ENCODE measurements at regions of chr1 and their contacts with region 1.

Region 1: DNA sequence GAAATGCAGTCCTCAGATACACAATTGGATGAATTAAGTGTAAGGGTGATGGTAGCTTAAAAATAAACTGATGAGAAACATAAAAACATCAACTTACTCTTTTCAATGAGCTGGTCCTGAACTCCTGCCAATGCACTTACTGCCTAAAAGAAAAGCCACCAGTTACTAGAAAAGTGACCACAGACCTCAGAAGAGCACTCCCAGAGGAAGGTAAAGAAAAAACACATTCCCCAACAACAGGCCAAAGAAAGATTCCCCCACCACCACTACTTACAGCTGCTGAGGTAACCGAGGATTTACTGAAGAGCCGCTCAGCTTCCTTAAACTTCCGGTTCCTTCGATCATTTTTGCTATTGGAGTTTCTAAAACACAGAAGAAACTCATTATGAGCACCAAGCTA is 5.4 kb downstream of the MEAF6 start:
- DNase-seq: no peak
- ATAC-seq: no peak
- H3K4me3 Mint-ChIP-seq: no peak overlapping the region
- H3K27ac Mint-ChIP-seq: peak overlapping the region; percentile 78
- H3K4me1 Mint-ChIP-seq: peaks cover 42% of the 10 kb centered on the region
- H3K27me3 Mint-ChIP-seq: no peaks in the 10 kb centered on the region

Region 2: GRCh38 chr1:36816348-36816747 is 692.8 kb before region 1 on chr1:
- CTCF ChIA-PET with region 1: no interaction called
- POLR2A ChIA-PET with region 1: no interaction called
- intact Hi-C with region 1: no loop called
- DNase-seq: no peak
- ATAC-seq: no peak
- H3K4me3 Mint-ChIP-seq: no peak overlapping the region
- H3K27ac Mint-ChIP-seq: no peak overlapping the region
- H3K4me1 Mint-ChIP-seq: no peaks in the 10 kb centered on the region
- H3K27me3 Mint-ChIP-seq: no peaks in the 10 kb centered on the region

Region 3: DNA sequence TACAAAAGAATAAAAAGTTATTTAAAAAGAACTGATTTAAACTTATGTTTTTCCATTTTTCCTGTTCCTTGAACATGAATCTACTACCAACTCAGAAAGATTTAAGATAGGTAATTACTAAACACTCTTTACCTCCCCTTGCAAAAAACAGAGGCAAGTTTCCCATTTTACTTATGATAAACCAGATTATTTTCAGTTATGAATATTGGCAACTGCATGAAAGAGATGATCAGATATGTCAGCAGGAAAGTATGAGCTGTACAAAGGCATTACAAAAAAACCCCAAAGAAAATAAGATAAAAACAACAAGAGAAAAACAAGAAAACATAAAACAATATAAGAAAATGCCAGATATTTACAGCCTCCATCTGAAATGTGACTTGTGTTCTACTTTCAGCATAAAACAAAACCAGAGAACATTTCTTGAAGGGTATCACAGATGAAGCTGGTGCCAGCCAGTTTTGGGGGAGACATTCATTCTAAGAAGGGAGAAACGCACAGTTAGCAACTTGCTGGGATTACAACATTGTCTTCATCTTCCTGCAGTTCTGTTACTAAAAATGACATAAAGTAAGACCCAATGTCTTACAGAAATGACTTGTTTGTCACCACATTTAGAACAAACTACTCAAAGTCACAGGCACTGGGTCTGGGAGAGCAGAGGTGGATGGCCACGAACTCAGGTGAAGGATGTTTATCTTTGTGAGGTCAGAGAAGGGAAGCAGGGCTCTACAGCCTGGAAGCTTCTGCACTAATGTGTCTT is 15.7 kb before region 1 on chr1:
- CTCF ChIA-PET with region 1: interaction called, 7 read pairs
- POLR2A ChIA-PET with region 1: no interaction called
- intact Hi-C with region 1: loop called in 1 of 2 experiments (anchors 2 kb)
- DNase-seq: peak; percentile 49
- ATAC-seq: peak; percentile 87
- H3K4me3 Mint-ChIP-seq: no peak overlapping the region
- H3K27ac Mint-ChIP-seq: peak overlapping the region; percentile 90
- H3K4me1 Mint-ChIP-seq: peaks cover 27% of the 10 kb centered on the region
- H3K27me3 Mint-ChIP-seq: no peaks in the 10 kb centered on the region

Measured in activated CD4-positive, alpha-beta T cell treated with anti-CD3 and anti-CD28 coated beads for 36 hours (primary cell).